Activated naive CD4-positive, alpha-beta T cell treated with anti-CD3 and anti-CD28 coated beads for 36 hours (primary cell): ENCODE measurements at regions of chr16 and their contacts with region 1.

Region 1: GRCh38 chr16:23803591-23804123 is 32.1 kb upstream of the PRKCB start:
- DNase-seq: peak; percentile 84
- H3K4me3 Mint-ChIP-seq: no peak overlapping the region
- H3K27ac Mint-ChIP-seq: no peak overlapping the region
- H3K4me1 Mint-ChIP-seq: peaks cover 12% of the 10 kb centered on the region
- H3K27me3 Mint-ChIP-seq: no peaks in the 10 kb centered on the region

Region 2: DNA sequence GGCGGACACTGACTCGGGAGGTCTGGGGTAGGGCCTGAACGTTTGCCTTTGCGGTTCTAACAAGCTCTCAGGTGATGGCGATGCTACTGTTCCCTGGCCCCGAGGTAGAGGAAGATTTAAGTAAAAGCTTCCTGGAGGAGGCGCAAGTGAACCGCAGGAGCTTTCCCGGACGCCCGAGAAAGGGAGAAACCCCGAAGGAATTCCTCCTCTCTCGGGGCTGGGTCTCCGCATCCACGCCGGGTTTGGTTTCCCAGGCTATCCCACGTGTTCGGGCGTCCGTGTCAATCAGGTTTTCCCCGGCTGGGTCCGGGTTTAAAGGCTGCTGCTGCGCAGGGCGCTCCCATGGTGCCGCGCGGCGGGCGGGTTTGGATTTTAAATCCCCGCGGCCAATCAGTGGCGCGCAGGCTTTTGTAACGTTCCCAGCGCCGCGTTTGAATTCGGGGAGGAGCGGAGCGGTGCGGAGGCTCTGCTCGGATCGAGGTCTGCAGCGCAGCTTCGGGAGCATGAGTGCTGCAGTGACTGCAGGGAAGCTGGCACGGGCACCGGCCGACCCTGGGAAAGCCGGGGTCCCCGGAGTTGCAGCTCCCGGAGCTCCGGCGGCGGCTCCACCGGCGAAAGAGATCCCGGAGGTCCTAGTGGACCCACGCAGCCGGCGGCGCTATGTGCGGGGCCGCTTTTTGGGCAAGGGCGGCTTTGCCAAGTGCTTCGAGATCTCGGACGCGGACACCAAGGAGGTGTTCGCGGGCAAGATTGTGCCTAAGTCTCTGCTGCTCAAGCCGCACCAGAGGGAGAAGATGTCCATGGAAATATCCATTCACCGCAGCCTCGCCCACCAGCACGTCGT is 125.0 kb before region 1 on chr16 and contains the start of gene PLK1:
- CTCF ChIA-PET with region 1: interaction called, 7 read pairs
- intact Hi-C with region 1: loop called (anchors 5 kb)
- DNase-seq: peak; percentile 90
- H3K4me3 Mint-ChIP-seq: peak within 1 kb of the TSS; percentile 89
- H3K27ac Mint-ChIP-seq: peak within 1 kb of the TSS; percentile 30
- H3K4me1 Mint-ChIP-seq: peaks cover 16% of the 10 kb centered on the region
- H3K27me3 Mint-ChIP-seq: peaks cover 3% of the 10 kb centered on the region
- total RNA-seq, gene PLK1: 91.8 to 98.0 TPM

Region 3: GRCh38 chr16:23826528-23827045 is 22.9 kb after region 1 on chr16:
- CTCF ChIA-PET with region 1: interaction called, 12 read pairs
- intact Hi-C with region 1: loop called (anchors 1 kb)
- DNase-seq: no peak
- H3K4me3 Mint-ChIP-seq: peak overlapping the region; percentile 17
- H3K27ac Mint-ChIP-seq: peak overlapping the region; percentile 70
- H3K4me1 Mint-ChIP-seq: peaks cover 21% of the 10 kb centered on the region
- H3K27me3 Mint-ChIP-seq: no peaks in the 10 kb centered on the region

Region 4: GRCh38 chr16:23877107-23878090 is 73.7 kb after region 1 on chr16:
- CTCF ChIA-PET with region 1: interaction called, 11 read pairs
- intact Hi-C with region 1: no loop called
- DNase-seq: peak; percentile 52
- H3K4me3 Mint-ChIP-seq: no peak overlapping the region
- H3K27ac Mint-ChIP-seq: peak overlapping the region; percentile 55
- H3K4me1 Mint-ChIP-seq: peaks cover 69% of the 10 kb centered on the region
- H3K27me3 Mint-ChIP-seq: no peaks in the 10 kb centered on the region

Region 5: GRCh38 chr16:24010440-24011089 is 206.9 kb after region 1 on chr16:
- CTCF ChIA-PET with region 1: interaction called, 195 read pairs
- intact Hi-C with region 1: loop called (anchors 1 kb)
- DNase-seq: peak; percentile 93
- H3K4me3 Mint-ChIP-seq: no peak overlapping the region
- H3K27ac Mint-ChIP-seq: no peak overlapping the region
- H3K4me1 Mint-ChIP-seq: peaks cover 43% of the 10 kb centered on the region
- H3K27me3 Mint-ChIP-seq: no peaks in the 10 kb centered on the region

Region 6: GRCh38 chr16:24504472-24505345 is 701.1 kb after region 1 on chr16:
- CTCF ChIA-PET with region 1: interaction called, 6 read pairs
- intact Hi-C with region 1: loop called (anchors 1 kb)
- DNase-seq: peak; percentile 70
- H3K4me3 Mint-ChIP-seq: no peak overlapping the region
- H3K27ac Mint-ChIP-seq: no peak overlapping the region
- H3K4me1 Mint-ChIP-seq: no peaks in the 10 kb centered on the region
- H3K27me3 Mint-ChIP-seq: no peaks in the 10 kb centered on the region